ENCODE measurements at regions of chr10 and their contacts with region 1.

Region 1: DNA sequence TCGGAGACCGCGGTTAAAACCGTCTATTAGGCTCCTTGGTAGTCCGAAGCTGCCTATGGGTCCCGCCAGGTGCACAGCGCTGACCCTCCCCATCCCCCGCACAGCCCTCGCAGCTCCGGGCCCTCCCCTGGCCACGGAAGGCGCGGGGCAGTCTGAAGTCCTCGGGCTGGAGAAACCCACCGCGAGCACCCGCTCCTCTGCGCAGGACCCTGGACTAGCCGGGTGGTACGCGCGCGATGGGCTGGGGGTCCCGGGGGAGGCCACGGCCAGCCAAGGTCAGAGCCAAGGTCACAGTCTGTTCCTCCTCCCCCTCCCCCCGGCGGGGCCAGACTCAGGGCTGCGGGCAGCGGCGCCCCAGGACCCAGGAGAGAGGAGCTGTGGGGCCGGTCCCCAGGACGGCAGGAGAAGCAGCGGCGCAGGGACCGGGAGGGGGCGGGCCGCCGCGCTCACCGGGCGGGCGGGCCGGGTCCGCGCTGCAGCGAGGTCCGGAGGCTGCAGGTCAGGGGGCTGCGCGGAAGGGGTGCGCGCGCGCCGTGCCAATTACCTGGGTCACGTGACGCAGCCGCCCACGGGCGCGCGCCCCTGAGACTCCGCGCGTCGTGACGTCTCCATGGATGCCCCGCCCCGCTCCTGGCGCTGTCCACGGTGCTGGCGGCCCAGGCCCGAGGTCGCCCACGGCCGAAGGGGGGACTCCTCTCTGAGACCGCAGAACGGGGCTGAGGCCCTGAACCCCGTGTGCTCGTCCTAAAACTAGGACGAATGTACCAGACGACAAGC is at the start of gene OGDHL:
- DNase-seq: peak; percentile 81
- ATAC-seq: peak; percentile 83
- H3K4me3 ChIP-seq: peak within 1 kb of the TSS; percentile 62
- H3K27ac ChIP-seq: no peak within 1 kb of the TSS
- H3K4me1 ChIP-seq: peaks cover 4% of the 10 kb centered on the region; the same call in 1 of the 2 replicates
- H3K27me3 ChIP-seq: peaks cover 40% of the 10 kb centered on the region
- CTCF ChIP-seq: no peak
- total RNA-seq, gene OGDHL: 2.0 and 2.6 TPM in 2 replicates

Region 2: DNA sequence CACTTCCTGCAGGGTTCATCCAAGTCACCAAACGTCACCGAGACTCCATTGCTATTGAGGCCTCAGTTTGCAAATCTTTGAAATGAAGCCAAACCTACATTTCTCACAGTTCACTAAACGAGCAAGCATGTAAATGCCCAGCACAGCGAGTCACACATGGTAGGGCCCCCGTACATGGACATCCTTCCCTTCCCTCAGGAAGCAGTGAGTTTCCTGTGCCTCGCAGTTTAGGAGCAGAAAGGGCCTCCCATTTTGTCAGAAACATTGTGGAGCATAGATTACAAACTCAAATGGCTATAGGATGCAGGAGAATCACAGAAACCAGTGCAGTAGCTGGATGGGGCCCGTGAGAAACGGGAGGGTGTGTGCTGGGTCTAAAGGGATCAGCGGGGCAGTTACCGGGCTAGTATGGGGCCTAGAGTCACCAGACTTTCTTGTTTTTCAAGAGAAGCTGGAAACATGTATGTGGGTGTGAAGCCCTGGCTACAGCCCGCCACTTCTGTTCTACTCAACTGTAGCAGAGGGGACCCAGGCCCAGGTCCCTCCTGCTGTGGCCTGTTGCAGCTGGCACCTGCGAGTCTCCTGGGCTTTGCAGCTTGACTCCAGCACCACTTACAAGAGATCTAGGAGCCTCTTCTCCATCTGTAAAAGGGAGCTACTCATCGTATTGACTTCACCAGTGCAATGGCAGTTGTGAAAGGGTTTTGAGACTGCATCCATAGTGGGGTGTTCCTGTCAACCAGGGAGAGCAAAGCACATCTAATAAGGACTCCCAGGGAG is 166.1 kb before region 1 on chr10:
- CTCF ChIA-PET with region 1: no interaction called
- POLR2A ChIA-PET with region 1: no interaction called
- intact Hi-C with region 1: no loop called
- DNase-seq: peak; percentile 45
- ATAC-seq: no peak
- H3K4me3 ChIP-seq: no peak overlapping the region
- H3K27ac ChIP-seq: no peak overlapping the region
- H3K4me1 ChIP-seq: peaks cover 8% of the 10 kb centered on the region; the same call in 1 of the 2 replicates
- H3K27me3 ChIP-seq: no peaks in the 10 kb centered on the region
- CTCF ChIP-seq: no peak

Region 3: DNA sequence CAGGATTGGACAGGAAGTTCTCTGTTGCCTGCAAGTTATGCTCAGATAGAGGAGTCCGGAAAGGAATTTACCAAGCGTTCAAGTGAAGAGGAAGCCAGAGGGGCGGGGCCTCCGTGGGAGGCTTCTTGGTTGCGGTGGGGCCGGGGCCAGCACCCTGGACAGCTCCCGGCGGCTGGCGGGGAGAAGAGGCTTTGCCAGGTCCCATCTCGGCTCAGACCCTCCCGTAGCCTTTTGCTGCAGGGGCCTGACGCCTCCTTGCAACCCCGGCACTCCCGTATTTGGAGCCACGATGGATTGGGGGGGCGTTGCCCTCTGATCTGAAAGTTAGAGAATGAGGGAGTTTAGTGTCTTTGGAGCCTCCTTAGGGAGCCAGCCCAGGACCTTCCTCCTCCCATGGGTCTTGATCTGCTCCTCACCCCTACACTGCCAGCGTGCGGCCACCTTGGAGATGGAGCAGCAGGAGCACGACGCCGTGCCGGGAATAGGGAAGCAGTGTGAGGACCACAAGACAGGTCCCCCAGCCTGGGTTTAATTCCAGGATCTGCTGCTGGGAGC is 154.9 kb before region 1 on chr10:
- CTCF ChIA-PET with region 1: no interaction called
- POLR2A ChIA-PET with region 1: no interaction called
- intact Hi-C with region 1: loop called (anchors 2 kb)
- DNase-seq: peak; percentile 92
- ATAC-seq: peak; percentile 80
- H3K4me3 ChIP-seq: no peak overlapping the region
- H3K27ac ChIP-seq: no peak overlapping the region
- H3K4me1 ChIP-seq: no peaks in the 10 kb centered on the region
- H3K27me3 ChIP-seq: peaks cover 58% of the 10 kb centered on the region
- CTCF ChIP-seq: no peak

Region 4: DNA sequence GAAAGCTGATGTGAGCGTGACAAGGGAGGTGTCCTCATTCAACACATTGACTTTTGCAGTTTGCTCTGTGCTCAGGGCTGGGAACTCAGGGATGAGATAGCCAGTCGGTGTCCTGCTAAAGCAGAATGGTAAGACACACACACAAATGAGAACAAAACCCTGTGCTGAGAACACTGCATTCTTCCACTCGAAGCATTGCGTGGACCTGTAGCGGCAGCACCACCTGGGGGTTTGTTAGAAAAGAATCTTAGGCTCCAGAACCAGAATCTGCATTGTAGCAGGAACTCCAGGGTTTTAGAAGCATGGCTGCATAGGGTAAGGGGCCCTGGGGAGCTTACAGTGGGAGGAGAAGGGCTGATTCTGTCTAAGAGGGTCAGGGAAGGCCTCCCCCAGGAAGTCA is 21.7 kb after region 1 on chr10:
- CTCF ChIA-PET with region 1: no interaction called
- POLR2A ChIA-PET with region 1: no interaction called
- intact Hi-C with region 1: no loop called
- DNase-seq: peak; percentile 53
- ATAC-seq: peak; percentile 49
- H3K4me3 ChIP-seq: no peak overlapping the region
- H3K27ac ChIP-seq: no peak overlapping the region
- H3K4me1 ChIP-seq: no peaks in the 10 kb centered on the region
- H3K27me3 ChIP-seq: peaks cover 50% of the 10 kb centered on the region
- CTCF ChIP-seq: peak; percentile 61

Region 5: DNA sequence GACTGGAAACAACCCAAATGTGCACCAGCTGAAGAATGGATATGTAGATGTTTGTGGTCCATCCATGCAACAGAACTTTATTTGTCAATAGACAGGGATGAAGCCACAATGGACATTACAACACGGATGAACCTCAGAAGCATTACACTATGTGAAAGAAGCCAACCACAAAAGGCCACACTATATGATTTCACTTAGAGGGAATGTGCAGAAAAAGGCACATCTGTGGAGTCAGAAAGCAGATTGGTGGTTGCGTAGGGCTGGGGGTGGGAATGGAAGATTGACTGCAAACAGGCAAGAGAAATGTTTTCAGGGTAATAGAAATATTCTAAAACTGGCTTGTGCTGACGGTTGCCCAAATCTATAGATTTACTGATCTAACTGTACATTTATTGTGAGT is 271.5 kb after region 1 on chr10:
- CTCF ChIA-PET with region 1: no interaction called
- POLR2A ChIA-PET with region 1: no interaction called
- intact Hi-C with region 1: no loop called
- DNase-seq: no peak
- ATAC-seq: no peak
- H3K4me3 ChIP-seq: no peak overlapping the region
- H3K27ac ChIP-seq: no peak overlapping the region
- H3K4me1 ChIP-seq: no peaks in the 10 kb centered on the region
- H3K27me3 ChIP-seq: peaks cover 15% of the 10 kb centered on the region; the same call in 1 of the 2 replicates
- CTCF ChIP-seq: no peak

Region 6: DNA sequence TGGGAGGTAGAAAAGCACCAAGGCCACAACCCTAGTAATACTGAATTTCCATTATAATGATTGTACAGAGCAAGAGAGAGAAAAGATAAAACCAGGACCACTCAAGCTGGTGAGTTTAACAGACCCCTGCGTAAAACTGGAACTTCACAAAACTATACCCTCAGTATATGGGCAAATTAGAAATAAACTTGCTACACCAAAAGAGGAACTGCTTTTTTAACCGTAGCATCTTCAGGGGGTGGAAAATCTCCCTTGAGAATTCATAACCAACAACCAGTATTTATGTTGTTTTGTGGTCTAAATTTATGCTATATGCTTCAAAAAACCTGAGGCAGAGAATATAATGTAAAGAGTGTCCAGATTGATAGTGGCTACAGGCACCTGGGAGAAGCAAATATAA is 690.6 kb after region 1 on chr10:
- CTCF ChIA-PET with region 1: no interaction called
- POLR2A ChIA-PET with region 1: no interaction called
- intact Hi-C with region 1: no loop called
- DNase-seq: no peak
- ATAC-seq: no peak
- H3K4me3 ChIP-seq: no peak overlapping the region
- H3K27ac ChIP-seq: no peak overlapping the region
- H3K4me1 ChIP-seq: no peaks in the 10 kb centered on the region
- H3K27me3 ChIP-seq: no peaks in the 10 kb centered on the region
- CTCF ChIP-seq: no peak

Measured in PC-3 (cell line).